Psoas muscle (tissue), 8 donors: ENCODE measurements at regions of chr19 and their contacts with region 1.

Region 1: GRCh38 chr19:20565321-20566018 is at the start of gene ZNF737:
- DNase-seq: peak; percentile 95 to 97
- ATAC-seq: peak; percentile 96 to 99 (median 98)
- H3K4me3 ChIP-seq: peak within 1 kb of the TSS; percentile 92
- H3K27ac ChIP-seq: peak within 1 kb of the TSS; percentile 72
- H3K4me1 ChIP-seq: peaks cover 8% of the 10 kb centered on the region
- H3K27me3 ChIP-seq: no peaks in the 10 kb centered on the region
- CTCF ChIP-seq: peak; percentile 46
- total RNA-seq, gene ZNF737: 2.2 to 4.3 (median 2.8) TPM

Region 2: DNA sequence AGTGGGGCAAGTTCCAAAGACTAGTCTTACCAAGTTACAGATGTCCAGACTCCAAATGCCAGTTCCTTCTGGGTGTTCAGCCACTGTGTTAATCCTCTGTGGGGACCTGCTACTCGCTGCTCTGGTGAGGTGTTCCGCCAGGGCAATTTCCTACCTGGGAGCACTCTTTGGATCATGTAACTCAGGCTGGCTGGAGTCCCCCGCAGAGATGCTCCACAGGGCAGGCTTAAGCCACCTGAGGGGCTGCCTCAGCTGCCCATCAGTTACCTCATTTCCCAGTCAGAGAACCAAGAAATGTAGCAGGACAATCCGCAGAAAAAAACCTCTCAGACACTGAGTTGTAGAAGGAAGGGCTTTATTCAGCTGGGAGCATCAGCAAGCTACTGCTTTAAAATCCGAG is 133.6 kb before region 1 on chr19:
- intact Hi-C with region 1: no loop called
- DNase-seq: no peak
- ATAC-seq: no peak
- H3K4me3 ChIP-seq: no peak overlapping the region
- H3K27ac ChIP-seq: no peak overlapping the region
- H3K4me1 ChIP-seq: no peaks in the 10 kb centered on the region
- H3K27me3 ChIP-seq: no peaks in the 10 kb centered on the region
- CTCF ChIP-seq: no peak

Region 3: GRCh38 chr19:20776083-20777076 is 210.9 kb after region 1 on chr19 and contains the start of gene ZNF66:
- intact Hi-C with region 1: loop called in 1 of 2 experiments (anchors 10 kb)
- DNase-seq: peak; percentile 95 to 97
- ATAC-seq: peak; percentile 100
- H3K4me3 ChIP-seq: peak within 1 kb of the TSS; percentile 93
- H3K27ac ChIP-seq: no peak within 1 kb of the TSS
- H3K4me1 ChIP-seq: no peaks in the 10 kb centered on the region
- H3K27me3 ChIP-seq: no peaks in the 10 kb centered on the region
- CTCF ChIP-seq: no peak
- total RNA-seq, gene ZNF66: 0.39 to 1.1 (median 0.64) TPM